OCI-LY7 (cell line): ENCODE measurements at regions of chr10 and their contacts with region 1.

Region 1: DNA sequence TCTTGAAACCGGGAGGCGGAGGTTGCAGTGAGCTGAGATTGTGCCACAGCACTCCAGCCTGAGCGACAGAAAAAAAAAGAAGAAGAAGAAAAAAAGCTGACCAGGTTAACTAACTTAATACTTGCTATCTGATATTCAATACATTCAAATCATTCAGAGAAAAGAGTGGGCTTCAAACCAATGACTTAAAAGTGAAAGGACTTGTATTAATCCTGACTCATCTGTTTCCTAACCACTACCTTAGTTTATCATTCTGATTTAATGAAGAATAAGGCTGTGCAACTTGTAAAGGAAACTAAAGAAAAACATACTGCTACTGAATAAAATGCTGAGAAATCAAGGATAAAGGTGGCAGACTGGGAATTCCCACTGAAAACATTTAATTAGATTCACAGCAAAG is 128.4 kb downstream of the NRBF2 start:
- DNase-seq: no peak
- H3K4me3 ChIP-seq: peak overlapping the region; percentile 82
- H3K27ac ChIP-seq: peak overlapping the region; percentile 94
- H3K4me1 ChIP-seq: peaks cover 75% of the 10 kb centered on the region
- CTCF ChIP-seq: no peak

Region 2: GRCh38 chr10:63236113-63236935 is 25.2 kb before region 1 on chr10:
- CTCF ChIA-PET with region 1: no interaction called
- POLR2A ChIA-PET with region 1: interaction called, 53 read pairs
- intact Hi-C with region 1: no loop called
- DNase-seq: peak; percentile 47
- H3K4me3 ChIP-seq: no peak overlapping the region
- H3K27ac ChIP-seq: peak overlapping the region; percentile 55
- H3K4me1 ChIP-seq: peaks cover 58% of the 10 kb centered on the region
- CTCF ChIP-seq: no peak

Region 3: GRCh38 chr10:63241841-63242281 is 19.6 kb before region 1 on chr10:
- CTCF ChIA-PET with region 1: no interaction called
- POLR2A ChIA-PET with region 1: interaction called, 53 read pairs
- intact Hi-C with region 1: loop called (anchors 2 kb)
- DNase-seq: no peak
- H3K4me3 ChIP-seq: peak overlapping the region; percentile 36
- H3K27ac ChIP-seq: peak overlapping the region; percentile 46
- H3K4me1 ChIP-seq: peaks cover 75% of the 10 kb centered on the region
- CTCF ChIP-seq: no peak